ENCODE measurements at regions of chr15 and their contacts with region 1.

Region 1: GRCh38 chr15:84588053-84588874 is 12.5 kb upstream of the ZSCAN2 start:
- DNase-seq: peak; percentile 74 to 91 (median 82)
- ATAC-seq: peak; percentile 100
- H3K4me3 ChIP-seq: no peak overlapping the region
- H3K4me3 Mint-ChIP-seq: no peak overlapping the region
- H3K27ac ChIP-seq: no peak overlapping the region
- H3K27ac Mint-ChIP-seq: no peak overlapping the region
- H3K4me1 ChIP-seq: peaks cover 8% of the 10 kb centered on the region
- H3K4me1 Mint-ChIP-seq: peaks cover 5% of the 10 kb centered on the region
- H3K27me3 ChIP-seq: peaks cover 0 to 3% of the 10 kb centered on the region in 2 experiments
- H3K27me3 Mint-ChIP-seq: no peaks in the 10 kb centered on the region
- CTCF ChIP-seq: peak; percentile 85

Region 2: GRCh38 chr15:84600851-84601838 is 12.9 kb after region 1 on chr15 and contains the start of gene ZSCAN2:
- CTCF ChIA-PET with region 1: interaction called, 21 read pairs
- POLR2A ChIA-PET with region 1: interaction called, 6 read pairs
- intact Hi-C with region 1: no loop called
- DNase-seq: peak; percentile 87 to 95 (median 90)
- ATAC-seq: peak; percentile 97
- H3K4me3 ChIP-seq: peak within 1 kb of the TSS; percentile 95
- H3K4me3 Mint-ChIP-seq: peak within 1 kb of the TSS; percentile 98
- H3K27ac ChIP-seq: peak within 1 kb of the TSS in 1 of 2 donors; percentile 13
- H3K27ac Mint-ChIP-seq: peak within 1 kb of the TSS; percentile 78
- H3K4me1 ChIP-seq: peaks cover 62% of the 10 kb centered on the region
- H3K4me1 Mint-ChIP-seq: peaks cover 72% of the 10 kb centered on the region
- H3K27me3 ChIP-seq: no peaks in the 10 kb centered on the region
- H3K27me3 Mint-ChIP-seq: no peaks in the 10 kb centered on the region
- CTCF ChIP-seq: no peak
- total RNA-seq, gene ZSCAN2: 3.8 to 5.0 TPM

Region 3: DNA sequence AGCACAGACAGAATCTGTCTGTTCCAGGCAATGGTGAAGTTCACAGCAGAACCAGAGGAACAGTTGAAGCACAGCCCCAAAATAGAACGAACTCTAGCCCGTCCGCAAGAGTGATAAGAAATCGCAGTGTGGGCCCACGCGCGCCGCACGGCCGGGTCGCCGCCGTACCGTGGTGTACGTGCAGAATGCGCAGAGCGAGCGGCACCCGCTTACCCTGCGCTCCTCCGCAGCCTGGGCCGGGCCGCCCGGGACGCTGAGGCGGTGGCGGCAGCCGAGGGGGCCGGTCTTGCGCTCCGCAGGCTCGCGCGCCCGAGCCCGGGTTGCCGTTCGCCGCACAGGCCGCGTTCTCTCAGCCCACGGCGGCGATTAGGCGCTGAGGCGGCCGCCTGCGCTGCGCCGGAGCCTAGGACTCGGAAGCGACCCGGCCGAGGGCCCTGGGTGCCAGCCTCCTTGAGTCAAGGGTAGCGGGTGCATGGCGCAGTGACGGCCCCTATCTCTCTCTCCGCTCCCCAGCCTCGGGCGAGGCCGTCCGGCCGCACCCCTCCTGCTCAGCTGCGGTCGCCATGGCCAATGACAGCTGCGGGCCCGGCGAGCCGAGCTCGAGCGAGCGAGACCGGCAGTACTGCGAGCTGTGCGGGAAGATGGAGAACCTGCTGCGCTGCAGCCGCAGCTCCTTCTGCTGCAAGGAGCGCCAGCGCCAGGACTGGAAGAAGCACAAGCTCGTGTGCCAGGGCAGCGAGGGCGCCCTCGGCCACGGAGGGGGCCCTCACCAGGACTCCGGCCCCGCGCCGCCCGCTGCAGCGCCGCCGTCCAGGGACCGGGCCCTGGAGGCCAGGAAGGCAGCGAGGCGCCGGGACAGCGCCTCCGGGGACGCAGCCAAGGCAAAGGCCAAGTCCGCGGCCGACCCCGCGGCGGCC is 45.3 kb after region 1 on chr15:
- CTCF ChIA-PET with region 1: interaction called, 11 read pairs
- POLR2A ChIA-PET with region 1: interaction called, 4 read pairs
- intact Hi-C with region 1: loop called (anchors 2 to 5 kb)
- DNase-seq: peak; percentile 43 to 85 (median 60)
- ATAC-seq: peak; percentile 41
- H3K4me3 ChIP-seq: peak overlapping the region; percentile 69
- H3K4me3 Mint-ChIP-seq: peak overlapping the region; percentile 96
- H3K27ac ChIP-seq: peak overlapping the region; percentile 29 to 61
- H3K27ac Mint-ChIP-seq: peak overlapping the region; percentile 92
- H3K4me1 ChIP-seq: peaks cover 41% of the 10 kb centered on the region
- H3K4me1 Mint-ChIP-seq: peaks cover 52% of the 10 kb centered on the region
- H3K27me3 ChIP-seq: no peaks in the 10 kb centered on the region
- H3K27me3 Mint-ChIP-seq: no peaks in the 10 kb centered on the region
- CTCF ChIP-seq: no peak

Region 4: DNA sequence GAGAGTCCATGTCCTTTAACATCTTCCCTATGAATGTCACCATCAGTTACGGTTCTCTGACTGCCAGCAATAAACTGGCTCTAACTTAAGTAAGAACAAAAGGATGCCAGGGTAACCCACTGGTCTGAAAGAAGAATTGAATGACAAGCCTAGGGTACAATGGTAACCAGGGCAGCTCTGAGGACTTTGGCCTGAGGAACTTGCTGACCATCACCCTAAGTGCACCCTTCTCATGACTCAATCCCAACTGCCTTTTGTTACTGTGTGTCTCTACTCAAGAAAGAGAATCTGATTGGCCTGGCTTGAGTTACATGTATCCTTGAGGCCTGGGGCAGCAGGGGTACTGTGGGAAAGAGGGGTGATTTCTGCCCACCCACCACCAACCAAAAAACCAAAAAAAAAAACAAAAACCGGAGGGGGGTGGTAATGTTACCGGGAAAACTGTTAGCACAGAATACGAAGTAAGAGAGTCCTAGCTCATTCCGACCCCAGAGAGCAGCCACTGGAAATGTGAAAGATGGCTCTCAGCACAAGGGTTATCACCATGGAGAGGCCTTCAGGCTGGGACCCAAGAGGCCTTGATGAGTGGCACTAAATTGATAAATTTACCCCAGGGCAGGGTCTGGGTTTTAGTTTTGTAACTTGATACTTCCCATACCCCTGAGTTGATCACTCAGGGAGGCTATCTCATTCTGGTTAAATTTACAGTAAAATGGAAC is 286.9 kb after region 1 on chr15:
- CTCF ChIA-PET with region 1: interaction called, 3 read pairs
- POLR2A ChIA-PET with region 1: no interaction called
- intact Hi-C with region 1: loop called (anchors 1 to 5 kb)
- DNase-seq: no peak
- ATAC-seq: no peak
- H3K4me3 ChIP-seq: no peak overlapping the region
- H3K4me3 Mint-ChIP-seq: no peak overlapping the region
- H3K27ac ChIP-seq: no peak overlapping the region
- H3K27ac Mint-ChIP-seq: no peak overlapping the region
- H3K4me1 ChIP-seq: no peaks in the 10 kb centered on the region
- H3K4me1 Mint-ChIP-seq: no peaks in the 10 kb centered on the region
- H3K27me3 ChIP-seq: no peaks in the 10 kb centered on the region
- H3K27me3 Mint-ChIP-seq: no peaks in the 10 kb centered on the region
- CTCF ChIP-seq: no peak

Region 5: GRCh38 chr15:84883433-84883832 is 295.2 kb after region 1 on chr15:
- CTCF ChIA-PET with region 1: no interaction called
- POLR2A ChIA-PET with region 1: no interaction called
- intact Hi-C with region 1: loop called (anchors 1 to 5 kb)
- DNase-seq: no peak
- ATAC-seq: no peak
- H3K4me3 ChIP-seq: no peak overlapping the region
- H3K4me3 Mint-ChIP-seq: no peak overlapping the region
- H3K27ac ChIP-seq: no peak overlapping the region
- H3K27ac Mint-ChIP-seq: no peak overlapping the region
- H3K4me1 ChIP-seq: no peaks in the 10 kb centered on the region
- H3K4me1 Mint-ChIP-seq: no peaks in the 10 kb centered on the region
- H3K27me3 ChIP-seq: no peaks in the 10 kb centered on the region
- H3K27me3 Mint-ChIP-seq: no peaks in the 10 kb centered on the region
- CTCF ChIP-seq: no peak

Region 6: GRCh38 chr15:84929744-84930371 is 341.6 kb after region 1 on chr15:
- CTCF ChIA-PET with region 1: interaction called, 25 read pairs
- POLR2A ChIA-PET with region 1: interaction called, 3 read pairs
- intact Hi-C with region 1: loop called (anchors 1 to 2 kb)
- DNase-seq: no peak
- ATAC-seq: no peak
- H3K4me3 ChIP-seq: no peak overlapping the region
- H3K4me3 Mint-ChIP-seq: no peak overlapping the region
- H3K27ac ChIP-seq: no peak overlapping the region
- H3K27ac Mint-ChIP-seq: no peak overlapping the region
- H3K4me1 ChIP-seq: peaks cover 3% of the 10 kb centered on the region
- H3K4me1 Mint-ChIP-seq: peaks cover 6% of the 10 kb centered on the region
- H3K27me3 ChIP-seq: no peaks in the 10 kb centered on the region
- H3K27me3 Mint-ChIP-seq: no peaks in the 10 kb centered on the region
- CTCF ChIP-seq: no peak

Region 7: GRCh38 chr15:84992157-84992944 is 404.1 kb after region 1 on chr15:
- CTCF ChIA-PET with region 1: no interaction called
- POLR2A ChIA-PET with region 1: no interaction called
- intact Hi-C with region 1: no loop called
- DNase-seq: peak in 4 of 14 experiments; percentile 15 to 48 (median 31)
- ATAC-seq: no peak
- H3K4me3 ChIP-seq: no peak overlapping the region
- H3K4me3 Mint-ChIP-seq: no peak overlapping the region
- H3K27ac ChIP-seq: no peak overlapping the region
- H3K27ac Mint-ChIP-seq: no peak overlapping the region
- H3K4me1 ChIP-seq: peaks cover 29% of the 10 kb centered on the region
- H3K4me1 Mint-ChIP-seq: peaks cover 60% of the 10 kb centered on the region
- H3K27me3 ChIP-seq: no peaks in the 10 kb centered on the region
- H3K27me3 Mint-ChIP-seq: no peaks in the 10 kb centered on the region
- CTCF ChIP-seq: no peak

Region 8: GRCh38 chr15:85044251-85044853 is 456.1 kb after region 1 on chr15:
- CTCF ChIA-PET with region 1: no interaction called
- POLR2A ChIA-PET with region 1: no interaction called
- intact Hi-C with region 1: loop called (anchors 2 to 5 kb)
- DNase-seq: peak; percentile 18 to 76 (median 40)
- ATAC-seq: peak; percentile 65
- H3K4me3 ChIP-seq: no peak overlapping the region
- H3K4me3 Mint-ChIP-seq: no peak overlapping the region
- H3K27ac ChIP-seq: no peak overlapping the region
- H3K27ac Mint-ChIP-seq: no peak overlapping the region
- H3K4me1 ChIP-seq: no peaks in the 10 kb centered on the region
- H3K4me1 Mint-ChIP-seq: peaks cover 42% of the 10 kb centered on the region
- H3K27me3 ChIP-seq: no peaks in the 10 kb centered on the region
- H3K27me3 Mint-ChIP-seq: no peaks in the 10 kb centered on the region
- CTCF ChIP-seq: peak; percentile 62